HepG2 (cell line): ENCODE measurements at regions of chr12 and their contacts with region 1.

Region 1: GRCh38 chr12:72889791-72890190 is 617.6 kb downstream of the TRHDE start:
- DNase-seq: no peak
- ATAC-seq: no peak
- H3K4me3 ChIP-seq: no peak overlapping the region
- H3K27ac ChIP-seq: no peak overlapping the region
- H3K4me1 ChIP-seq: no peaks in the 10 kb centered on the region
- H3K27me3 ChIP-seq: no peaks in the 10 kb centered on the region
- CTCF ChIP-seq: no peak
- EP300 ChIP-seq: no peak
- POLR2A ChIP-seq: no peak
- RAD21 ChIP-seq: no peak

Region 2: GRCh38 chr12:72747111-72747849 is 142.5 kb before region 1 on chr12:
- CTCF ChIA-PET with region 1: no interaction called
- POLR2A ChIA-PET with region 1: no interaction called
- in situ Hi-C with region 1: no loop called
- intact Hi-C with region 1: no loop called
- DNase-seq: no peak
- ATAC-seq: no peak
- H3K4me3 ChIP-seq: no peak overlapping the region
- H3K27ac ChIP-seq: no peak overlapping the region
- H3K4me1 ChIP-seq: no peaks in the 10 kb centered on the region
- H3K27me3 ChIP-seq: no peaks in the 10 kb centered on the region
- CTCF ChIP-seq: no peak
- EP300 ChIP-seq: no peak
- POLR2A ChIP-seq: no peak
- RAD21 ChIP-seq: no peak

Region 3: GRCh38 chr12:72974954-72975555 is 85.3 kb after region 1 on chr12:
- CTCF ChIA-PET with region 1: no interaction called
- POLR2A ChIA-PET with region 1: no interaction called
- in situ Hi-C with region 1: no loop called
- intact Hi-C with region 1: no loop called
- DNase-seq: no peak
- ATAC-seq: no peak
- H3K4me3 ChIP-seq: no peak overlapping the region
- H3K27ac ChIP-seq: no peak overlapping the region
- H3K4me1 ChIP-seq: no peaks in the 10 kb centered on the region
- H3K27me3 ChIP-seq: no peaks in the 10 kb centered on the region
- CTCF ChIP-seq: no peak
- EP300 ChIP-seq: no peak
- POLR2A ChIP-seq: no peak
- RAD21 ChIP-seq: no peak

Region 4: DNA sequence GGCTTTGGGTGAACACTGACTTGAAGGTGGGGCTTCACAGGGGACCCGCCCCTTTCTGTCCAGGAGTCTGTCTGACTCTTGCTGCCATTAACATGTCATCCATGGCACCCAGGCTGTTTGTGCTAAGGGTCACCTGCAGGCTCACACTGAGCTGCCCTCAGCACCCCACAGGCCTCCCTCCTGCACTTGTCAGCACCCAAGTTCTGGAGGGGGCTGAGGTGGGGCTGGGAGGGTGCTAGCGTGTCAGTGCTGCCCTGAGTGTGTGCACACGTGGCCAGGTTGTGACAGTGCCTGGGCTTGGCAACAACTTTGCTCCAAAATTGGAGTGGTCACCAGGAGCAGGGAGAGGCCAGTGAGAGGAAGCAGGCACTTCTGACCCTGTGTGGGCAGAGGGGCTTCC is 345.6 kb after region 1 on chr12:
- CTCF ChIA-PET with region 1: no interaction called
- POLR2A ChIA-PET with region 1: no interaction called
- in situ Hi-C with region 1: no loop called
- intact Hi-C with region 1: no loop called
- DNase-seq: no peak
- ATAC-seq: no peak
- H3K4me3 ChIP-seq: no peak overlapping the region
- H3K27ac ChIP-seq: no peak overlapping the region
- H3K4me1 ChIP-seq: no peaks in the 10 kb centered on the region
- H3K27me3 ChIP-seq: no peaks in the 10 kb centered on the region
- CTCF ChIP-seq: no peak
- EP300 ChIP-seq: no peak
- POLR2A ChIP-seq: no peak
- RAD21 ChIP-seq: no peak

Region 5: DNA sequence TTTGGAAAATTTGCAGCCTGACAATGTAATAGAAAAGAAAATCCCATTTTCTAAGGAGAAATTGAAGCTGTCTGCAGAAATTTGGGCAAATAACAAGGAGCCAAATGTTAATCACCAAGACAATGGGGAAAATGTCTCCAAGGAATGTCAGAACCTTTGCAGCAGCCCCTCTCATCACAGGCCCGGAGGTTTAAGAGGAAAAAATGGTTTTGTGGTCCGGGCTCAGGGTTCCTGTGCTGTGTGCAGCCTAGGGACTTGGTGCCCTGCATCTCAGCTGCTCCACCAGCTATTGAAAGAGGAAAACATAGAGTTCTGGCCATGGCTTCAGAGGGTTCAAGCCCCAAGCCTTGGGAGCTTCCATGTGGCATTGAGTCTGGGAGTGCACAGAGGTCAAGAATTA is 1946.8 kb after region 1 on chr12:
- CTCF ChIA-PET with region 1: no interaction called
- POLR2A ChIA-PET with region 1: no interaction called
- in situ Hi-C with region 1: no loop called
- intact Hi-C with region 1: loop called (anchors 10 kb)
- DNase-seq: no peak
- ATAC-seq: no peak
- H3K4me3 ChIP-seq: no peak overlapping the region
- H3K27ac ChIP-seq: no peak overlapping the region
- H3K4me1 ChIP-seq: no peaks in the 10 kb centered on the region
- H3K27me3 ChIP-seq: no peaks in the 10 kb centered on the region
- CTCF ChIP-seq: no peak
- EP300 ChIP-seq: no peak
- POLR2A ChIP-seq: no peak
- RAD21 ChIP-seq: no peak